Activated B cell treated with CpG ODN at 0.5 μM for 24 hours (primary cell): ENCODE measurements at regions of chr13 and their contacts with region 1.

Region 1: DNA sequence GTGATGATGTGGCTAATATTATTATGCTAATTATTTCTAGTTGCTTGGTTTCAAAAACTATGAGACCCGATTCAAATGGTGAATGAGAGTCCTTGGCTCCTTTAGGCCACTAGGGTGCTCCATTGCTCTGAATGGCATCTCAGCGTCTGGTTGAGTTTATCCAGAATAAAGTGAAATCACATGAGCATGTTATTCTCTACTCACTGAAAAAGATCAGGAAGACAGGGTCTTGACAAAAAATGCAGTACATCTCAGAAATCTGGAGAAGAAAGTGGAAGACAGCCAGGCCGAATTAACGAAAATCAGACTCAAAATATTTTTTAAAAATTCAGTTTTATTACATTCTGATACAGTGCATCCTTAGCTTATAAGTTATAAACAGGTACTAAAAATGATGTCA is 516.2 kb downstream of the MYO16 start:
- DNase-seq: no peak
- ATAC-seq: peak; percentile 71
- H3K4me3 Mint-ChIP-seq: no peak overlapping the region
- H3K27ac Mint-ChIP-seq: no peak overlapping the region
- H3K4me1 Mint-ChIP-seq: no peaks in the 10 kb centered on the region
- H3K27me3 Mint-ChIP-seq: peaks cover 25% of the 10 kb centered on the region
- CTCF ChIP-seq: peak; percentile 64

Region 2: GRCh38 chr13:109162248-109163053 is 16.8 kb after region 1 on chr13:
- CTCF ChIA-PET with region 1: interaction called, 3 read pairs
- POLR2A ChIA-PET with region 1: no interaction called
- intact Hi-C with region 1: loop called (anchors 1 kb)
- DNase-seq: peak; percentile 48
- ATAC-seq: peak; percentile 94
- H3K4me3 Mint-ChIP-seq: peak overlapping the region; percentile 69
- H3K27ac Mint-ChIP-seq: peak overlapping the region; percentile 84
- H3K4me1 Mint-ChIP-seq: peaks cover 42% of the 10 kb centered on the region
- H3K27me3 Mint-ChIP-seq: peaks cover 18% of the 10 kb centered on the region
- CTCF ChIP-seq: no peak

Region 3: GRCh38 chr13:109211616-109212015 is 66.0 kb after region 1 on chr13:
- CTCF ChIA-PET with region 1: no interaction called
- POLR2A ChIA-PET with region 1: no interaction called
- intact Hi-C with region 1: no loop called
- DNase-seq: no peak
- ATAC-seq: no peak
- H3K4me3 Mint-ChIP-seq: no peak overlapping the region
- H3K27ac Mint-ChIP-seq: no peak overlapping the region
- H3K4me1 Mint-ChIP-seq: no peaks in the 10 kb centered on the region
- H3K27me3 Mint-ChIP-seq: no peaks in the 10 kb centered on the region
- CTCF ChIP-seq: no peak

Region 4: DNA sequence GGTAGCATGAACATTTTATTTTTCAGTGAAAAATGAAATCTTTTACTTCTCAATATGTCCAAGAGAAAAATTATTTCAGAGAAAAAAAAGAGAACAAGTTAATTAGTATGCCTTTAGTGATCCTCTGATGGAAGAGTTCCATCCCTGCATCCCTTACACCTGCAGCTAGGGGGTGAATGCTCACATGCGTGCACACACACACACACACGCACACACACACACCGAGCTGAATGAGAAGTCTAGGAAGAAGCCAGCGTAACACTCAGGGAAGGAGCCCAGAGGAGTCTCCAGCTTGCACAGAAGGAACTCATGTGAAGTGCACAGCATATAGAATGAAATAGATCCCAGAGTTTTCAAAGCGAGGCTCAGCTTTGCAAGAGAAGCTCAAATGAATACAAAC is 130.2 kb after region 1 on chr13:
- CTCF ChIA-PET with region 1: no interaction called
- POLR2A ChIA-PET with region 1: no interaction called
- intact Hi-C with region 1: loop called (anchors 10 kb)
- DNase-seq: no peak
- ATAC-seq: no peak
- H3K4me3 Mint-ChIP-seq: no peak overlapping the region
- H3K27ac Mint-ChIP-seq: no peak overlapping the region
- H3K4me1 Mint-ChIP-seq: no peaks in the 10 kb centered on the region
- H3K27me3 Mint-ChIP-seq: no peaks in the 10 kb centered on the region
- CTCF ChIP-seq: no peak

Region 5: GRCh38 chr13:109786457-109787134 is 641.0 kb after region 1 on chr13 and contains the start of gene IRS2:
- CTCF ChIA-PET with region 1: interaction called, 7 read pairs
- POLR2A ChIA-PET with region 1: no interaction called
- intact Hi-C with region 1: loop called (anchors 1 kb)
- DNase-seq: peak; percentile 84
- ATAC-seq: peak; percentile 88
- H3K4me3 Mint-ChIP-seq: peak within 1 kb of the TSS; percentile 86
- H3K27ac Mint-ChIP-seq: peak within 1 kb of the TSS; percentile 56
- H3K4me1 Mint-ChIP-seq: peaks cover under 1% of the 10 kb centered on the region
- H3K27me3 Mint-ChIP-seq: peaks cover 4% of the 10 kb centered on the region
- CTCF ChIP-seq: no peak
- total RNA-seq, gene IRS2: 4.2 and 4.4 TPM in 2 replicates

Region 6: DNA sequence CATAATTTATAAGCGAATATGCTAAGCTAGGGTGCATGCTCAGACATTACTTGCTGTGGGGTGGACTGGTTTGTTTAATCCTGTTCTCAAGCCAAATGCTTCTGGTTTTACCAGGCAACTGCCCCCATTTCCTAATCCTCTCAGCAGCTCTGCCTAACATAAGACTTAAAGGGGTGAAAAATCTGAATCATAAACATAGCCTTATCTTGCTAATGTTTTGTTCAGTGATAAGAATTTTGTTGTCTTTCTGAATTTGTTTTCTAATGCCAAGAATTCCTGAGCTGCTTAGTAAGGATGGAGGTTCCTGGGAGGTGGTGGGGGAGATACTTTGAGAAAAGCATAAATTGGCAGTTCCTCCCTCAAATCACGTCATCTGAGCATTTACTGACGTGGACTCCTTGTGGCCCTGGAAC is 1610.6 kb after region 1 on chr13:
- CTCF ChIA-PET with region 1: no interaction called
- POLR2A ChIA-PET with region 1: no interaction called
- intact Hi-C with region 1: no loop called
- DNase-seq: no peak
- ATAC-seq: no peak
- H3K4me3 Mint-ChIP-seq: no peak overlapping the region
- H3K27ac Mint-ChIP-seq: no peak overlapping the region
- H3K4me1 Mint-ChIP-seq: no peaks in the 10 kb centered on the region
- H3K27me3 Mint-ChIP-seq: peaks cover 7% of the 10 kb centered on the region
- CTCF ChIP-seq: no peak